Sciatic nerve (tissue), 2 donors: ENCODE measurements at regions of chr15 and their contacts with region 1.

Region 1: DNA sequence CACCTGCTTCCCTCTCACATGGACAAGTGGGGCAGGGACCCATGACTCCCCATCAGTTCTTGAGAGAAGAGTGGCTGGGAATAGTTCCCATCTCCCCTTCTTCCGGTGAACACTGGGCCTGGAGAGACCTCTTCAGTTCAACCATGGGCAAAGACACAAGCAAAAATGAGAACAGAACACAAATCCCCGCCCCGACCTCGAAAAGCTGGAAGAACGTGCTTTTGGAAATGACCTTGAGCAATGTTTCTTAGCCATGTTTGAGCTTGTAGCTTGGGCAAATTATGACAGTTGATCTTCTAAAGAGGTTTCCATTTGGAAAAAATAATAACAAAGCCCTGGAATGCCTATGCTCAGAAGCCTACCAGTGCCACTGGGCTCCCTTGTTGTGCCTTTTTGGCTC is 59.0 kb downstream of the FAM174B start:
- DNase-seq: peak; percentile 28
- ATAC-seq: peak; percentile 39

Region 2: DNA sequence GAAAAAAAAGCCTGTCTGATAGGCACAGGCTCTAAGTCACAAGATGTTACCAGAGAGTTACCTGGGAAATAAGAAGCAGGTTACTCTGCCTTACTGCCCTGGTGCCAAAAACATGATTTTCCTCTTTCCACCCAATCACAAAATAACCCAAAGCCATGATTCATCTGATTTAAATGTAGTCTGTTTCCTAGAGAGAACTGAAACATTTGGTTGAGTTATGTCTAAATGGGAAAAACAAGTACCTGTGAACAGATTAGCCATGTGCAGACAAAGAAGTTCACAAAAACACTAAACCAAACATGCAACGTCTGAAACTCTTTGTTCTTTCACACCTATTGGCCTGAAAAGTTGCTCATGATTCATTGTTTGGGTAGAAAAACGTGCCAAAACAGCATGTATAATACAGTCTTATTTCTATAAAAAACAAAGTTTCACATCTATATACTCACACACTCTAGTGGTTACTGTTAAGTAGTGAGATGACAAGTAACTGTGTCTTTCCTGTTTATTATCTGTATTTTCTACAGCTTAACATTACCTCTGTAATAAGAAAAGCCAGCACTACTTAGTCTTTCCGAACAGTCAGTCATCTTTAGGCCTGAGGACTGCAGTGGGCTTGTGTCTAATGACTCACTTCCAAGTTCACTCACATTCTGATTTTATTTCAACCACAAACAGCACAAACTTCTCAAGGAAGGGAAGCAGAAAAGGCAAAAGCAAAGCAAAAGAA is 28.8 kb after region 1 on chr15:
- intact Hi-C with region 1: loop called (anchors 1 kb)
- DNase-seq: no peak
- ATAC-seq: no peak